ENCODE measurements at regions of chr14 and their contacts with region 1.

Region 1: DNA sequence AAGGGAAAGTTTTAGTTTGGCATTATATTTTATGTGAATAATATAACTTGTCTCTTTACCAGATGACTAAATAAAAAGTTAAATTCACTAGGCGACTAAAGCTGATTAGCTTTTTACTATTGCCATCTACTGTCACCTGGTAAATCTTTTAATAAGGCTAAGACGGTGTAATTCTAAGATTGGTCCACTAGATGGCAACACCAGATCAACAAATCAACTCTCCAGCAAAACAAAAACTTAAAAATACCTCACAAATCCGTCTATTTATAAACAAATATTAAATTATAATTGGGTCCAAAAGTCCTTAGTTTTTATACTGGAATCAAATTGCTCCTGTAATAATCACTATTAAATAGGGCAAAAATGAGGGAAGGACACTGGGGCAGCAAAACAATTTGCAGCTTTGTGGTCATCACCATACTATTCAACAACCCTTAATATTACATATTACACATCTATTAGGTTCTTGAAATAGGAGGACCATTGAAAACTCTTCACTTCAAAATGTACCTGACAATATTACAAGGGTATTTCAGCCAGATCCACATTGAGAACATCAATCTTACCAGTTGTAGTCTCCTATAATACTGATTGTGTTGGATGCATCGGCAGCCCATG is 47.9 kb downstream of the GALC start:
- DNase-seq: no peak
- H3K4me3 ChIP-seq: no peak overlapping the region
- H3K27ac ChIP-seq: no peak overlapping the region
- H3K4me1 ChIP-seq: no peaks in the 10 kb centered on the region
- H3K27me3 ChIP-seq: no peaks in the 10 kb centered on the region
- CTCF ChIP-seq: peak in 2 of 3 experiments; percentile 37 to 47; a peak in 2 of 4 replicates
- EP300 ChIP-seq: no peak
- POLR2A ChIP-seq: no peak
- RAD21 ChIP-seq: peak; percentile 57 to 67

Region 2: GRCh38 chr14:87934185-87934584 is 10.9 kb before region 1 on chr14:
- CTCF ChIA-PET with region 1: interaction called, 49 read pairs
- POLR2A ChIA-PET with region 1: no interaction called
- DNase-seq: no peak
- H3K4me3 ChIP-seq: no peak overlapping the region
- H3K27ac ChIP-seq: no peak overlapping the region
- H3K4me1 ChIP-seq: no peaks in the 10 kb centered on the region
- H3K27me3 ChIP-seq: no peaks in the 10 kb centered on the region
- CTCF ChIP-seq: peak in 2 of 3 experiments; percentile 5 to 7; a peak in 1 of 4 replicates
- EP300 ChIP-seq: no peak
- POLR2A ChIP-seq: no peak
- RAD21 ChIP-seq: no peak